Dorsolateral prefrontal cortex (tissue), 120 donors: ENCODE measurements at regions of chr9 and their contacts with region 1.

Region 1: GRCh38 chr9:37746848-37747753 is 6.5 kb upstream of the TRMT10B start:
- DNase-seq: peak in 8 of 10 donors; percentile 41 to 73 (median 65)
- H3K4me3 ChIP-seq: no peak overlapping the region
- H3K27ac ChIP-seq: no peak overlapping the region
- H3K27me3 ChIP-seq: no peaks in the 10 kb centered on the region
- CTCF ChIP-seq: peak; percentile 61 to 95 (median 88)

Region 2: DNA sequence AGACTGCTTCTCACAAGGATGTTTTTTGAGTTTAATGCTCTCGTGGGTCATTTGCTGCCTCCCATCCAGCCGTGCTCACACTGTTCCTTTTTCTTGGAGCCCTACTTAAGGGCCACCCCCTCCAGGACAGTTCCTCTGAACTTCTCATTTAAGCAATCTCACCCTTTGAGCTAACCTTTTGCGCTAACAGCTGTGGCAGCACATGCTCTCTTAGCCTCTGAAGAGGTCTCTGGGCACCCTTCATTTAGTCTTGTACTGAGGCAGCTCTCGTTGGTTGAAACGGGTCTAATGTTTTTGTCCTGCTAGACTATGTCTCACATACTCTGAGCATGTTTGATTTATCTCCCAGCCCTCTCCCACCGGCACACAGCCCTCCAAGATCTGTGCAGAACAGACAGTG is 657.2 kb after region 1 on chr9:
- intact Hi-C with region 1: loop called in 1 of 2 experiments (anchors 5 kb)
- DNase-seq: no peak
- H3K4me3 ChIP-seq: no peak overlapping the region
- H3K27ac ChIP-seq: no peak overlapping the region
- H3K27me3 ChIP-seq: peaks cover 0 to 11% (median 0%) of the 10 kb centered on the region in 45 donors
- CTCF ChIP-seq: no peak